HCT116 (cell line): ENCODE measurements at regions of chrX and their contacts with region 1.

Region 1: GRCh38 chrX:10189317-10190268 is 32.8 kb downstream of the CLCN4 start:
- DNase-seq: peak; percentile 51
- ATAC-seq: peak; percentile 90
- H3K4me3 ChIP-seq: no peak overlapping the region
- H3K27ac ChIP-seq: no peak overlapping the region
- H3K4me1 ChIP-seq: peaks cover 0 to 6% of the 10 kb centered on the region in 2 experiments; a peak in 2 of 4 replicates
- H3K27me3 ChIP-seq: no peaks in the 10 kb centered on the region
- CTCF ChIP-seq: peak; percentile 52 to 61 (median 52)
- POLR2A ChIP-seq: no peak
- RAD21 ChIP-seq: peak; percentile 79

Region 2: DNA sequence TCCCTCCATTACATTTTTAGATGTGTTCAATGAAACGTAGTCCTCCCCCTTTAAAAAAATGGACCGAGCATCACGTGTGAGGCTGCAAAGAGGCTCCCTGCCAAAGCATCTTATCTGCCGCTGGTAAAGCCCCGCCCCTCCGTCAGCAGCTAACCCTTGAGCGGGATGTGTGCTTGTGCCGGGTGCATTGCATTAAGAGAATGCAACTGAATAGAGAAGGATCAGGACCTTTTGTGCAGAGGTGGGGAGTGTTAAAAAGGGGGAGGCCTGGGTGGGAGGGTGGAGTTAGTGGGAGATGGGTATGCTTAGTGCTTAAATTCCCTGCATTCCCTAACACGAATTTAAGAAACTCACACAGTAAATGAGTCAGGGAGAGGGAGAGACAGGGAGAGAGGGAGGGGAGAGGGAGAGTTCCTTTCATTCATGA is 658.7 kb before region 1 on chrX:
- CTCF ChIA-PET with region 1: no interaction called
- POLR2A ChIA-PET with region 1: no interaction called
- RAD21 ChIA-PET with region 1: no interaction called
- intact Hi-C with region 1: no loop called
- DNase-seq: no peak
- ATAC-seq: peak; percentile 80
- H3K4me3 ChIP-seq: no peak overlapping the region
- H3K27ac ChIP-seq: no peak overlapping the region
- H3K4me1 ChIP-seq: peaks cover 2 to 8% of the 10 kb centered on the region in 2 experiments; a peak in 2 of 4 replicates
- H3K27me3 ChIP-seq: no peaks in the 10 kb centered on the region
- CTCF ChIP-seq: no peak
- POLR2A ChIP-seq: no peak
- RAD21 ChIP-seq: no peak

Region 3: DNA sequence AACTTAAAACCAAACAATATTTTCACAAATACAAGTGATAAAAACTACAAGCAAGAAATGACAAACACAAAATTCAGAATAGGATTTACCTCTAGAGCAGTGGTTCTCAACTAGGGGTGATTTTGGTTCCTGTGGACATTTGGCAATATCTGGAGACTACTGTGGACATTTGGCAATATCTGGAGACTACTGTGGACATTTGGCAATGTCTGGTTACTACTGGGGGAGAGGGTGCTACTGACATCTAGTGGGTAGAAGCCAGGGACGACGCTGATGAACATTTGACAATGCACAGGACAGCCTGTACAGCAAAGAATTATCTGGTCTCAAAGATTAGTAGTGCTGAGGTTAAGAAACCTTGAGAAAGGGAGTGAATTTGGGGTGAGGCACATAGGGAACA is 137.0 kb after region 1 on chrX:
- CTCF ChIA-PET with region 1: interaction called, 5 read pairs
- POLR2A ChIA-PET with region 1: no interaction called
- RAD21 ChIA-PET with region 1: no interaction called
- intact Hi-C with region 1: loop called (anchors 1 kb)
- DNase-seq: peak; percentile 22
- ATAC-seq: peak; percentile 87
- H3K4me3 ChIP-seq: no peak overlapping the region
- H3K27ac ChIP-seq: no peak overlapping the region
- H3K4me1 ChIP-seq: peaks cover 7 to 12% of the 10 kb centered on the region in 2 experiments; a peak in 3 of 4 replicates
- H3K27me3 ChIP-seq: no peaks in the 10 kb centered on the region
- CTCF ChIP-seq: peak; percentile 46 to 57 (median 57); a peak in 5 of 6 replicates
- POLR2A ChIP-seq: no peak
- RAD21 ChIP-seq: peak; percentile 67

Region 4: DNA sequence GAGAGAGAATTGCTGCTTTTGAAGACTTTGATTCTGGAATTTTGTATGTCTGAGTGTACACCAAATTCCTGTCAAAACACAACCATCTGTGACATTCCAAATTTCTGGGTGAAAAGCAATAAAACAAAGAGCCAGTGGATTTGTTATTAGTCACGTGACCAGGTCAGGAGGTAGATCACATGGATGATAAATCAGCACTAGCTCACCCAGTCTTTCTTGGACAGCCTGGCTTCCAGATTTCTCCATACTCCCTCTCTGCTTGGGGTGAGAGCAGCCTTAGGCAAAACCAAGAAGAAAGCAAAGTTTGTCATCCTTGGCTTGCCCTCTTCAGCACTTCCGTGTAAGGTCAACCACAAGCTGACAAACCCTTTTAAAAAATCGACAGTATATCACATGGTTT is 161.4 kb after region 1 on chrX:
- CTCF ChIA-PET with region 1: no interaction called
- POLR2A ChIA-PET with region 1: no interaction called
- RAD21 ChIA-PET with region 1: no interaction called
- intact Hi-C with region 1: no loop called
- DNase-seq: no peak
- ATAC-seq: no peak
- H3K4me3 ChIP-seq: no peak overlapping the region
- H3K27ac ChIP-seq: no peak overlapping the region
- H3K4me1 ChIP-seq: no peaks in the 10 kb centered on the region
- H3K27me3 ChIP-seq: no peaks in the 10 kb centered on the region
- CTCF ChIP-seq: no peak
- POLR2A ChIP-seq: no peak
- RAD21 ChIP-seq: no peak

Region 5: DNA sequence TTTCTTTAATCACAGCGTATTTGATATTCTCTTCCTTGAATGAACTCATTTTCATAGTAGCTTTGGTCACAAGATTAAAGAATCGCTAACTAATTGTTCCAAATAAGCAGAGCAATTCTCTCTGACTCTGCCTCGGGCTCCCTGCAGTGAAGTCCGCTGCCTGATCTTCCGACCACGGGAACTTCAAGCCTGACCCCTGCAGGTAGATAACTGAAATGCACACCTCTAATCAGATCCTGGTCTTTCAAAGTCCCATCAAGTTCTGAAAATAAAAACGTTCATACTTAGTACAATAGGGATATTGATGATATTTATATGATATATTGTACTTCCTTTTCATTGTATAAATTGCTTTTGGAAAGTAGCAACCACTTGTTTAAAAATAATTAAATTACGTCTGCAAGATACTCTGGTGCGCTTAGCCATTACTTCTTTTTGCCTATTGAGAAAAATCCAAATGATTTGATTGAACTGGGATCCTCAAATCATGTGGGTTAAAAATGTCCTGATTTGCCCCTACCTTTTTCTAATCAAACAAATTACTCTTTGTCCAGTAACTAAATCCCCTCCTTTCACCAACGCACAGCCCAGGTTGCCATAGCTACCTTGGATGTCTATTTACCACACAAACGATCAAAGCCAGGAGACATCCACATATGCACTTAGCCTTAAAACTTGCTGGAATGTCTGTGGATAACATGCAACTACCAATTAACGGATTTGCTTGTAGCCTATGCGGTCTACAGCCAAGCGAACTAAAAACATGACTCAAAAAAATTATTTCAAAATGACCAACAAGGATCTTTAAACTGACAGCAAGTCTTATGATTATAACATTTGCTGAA is 426.6 kb after region 1 on chrX:
- CTCF ChIA-PET with region 1: interaction called, 6 read pairs
- POLR2A ChIA-PET with region 1: no interaction called
- RAD21 ChIA-PET with region 1: interaction called in 1 of 2 experiments, 3 read pairs
- intact Hi-C with region 1: loop called (anchors 5 kb)
- DNase-seq: no peak
- ATAC-seq: peak; percentile 33; the same call in 1 of the 2 replicates
- H3K4me3 ChIP-seq: peak overlapping the region; percentile 13 to 44; a peak in 2 of 4 replicates
- H3K27ac ChIP-seq: peak overlapping the region; percentile 85
- H3K4me1 ChIP-seq: peaks cover 36 to 68% of the 10 kb centered on the region in 2 experiments
- H3K27me3 ChIP-seq: no peaks in the 10 kb centered on the region
- CTCF ChIP-seq: peak in 2 of 3 experiments; percentile 56 to 62; a peak in 4 of 6 replicates
- POLR2A ChIP-seq: no peak
- RAD21 ChIP-seq: no peak

Region 6: DNA sequence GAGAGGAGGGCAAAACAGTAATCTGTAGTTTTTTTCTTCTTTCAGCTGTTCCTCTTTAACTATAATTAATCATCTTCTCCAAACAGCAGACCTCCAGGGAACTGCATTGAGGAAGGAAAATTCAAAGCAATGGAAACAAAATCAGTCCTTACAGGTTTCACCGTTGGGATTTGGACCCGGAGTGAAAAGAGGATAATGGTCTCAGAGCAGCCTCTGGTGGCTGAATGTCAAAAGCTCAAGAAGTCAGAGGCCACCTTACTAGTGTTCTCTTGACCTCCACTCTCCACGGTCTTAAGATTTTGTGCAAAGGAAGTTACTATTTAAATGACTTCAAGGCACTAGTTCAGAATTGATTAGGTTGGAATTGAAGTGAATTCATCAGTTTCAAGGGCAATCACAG is 446.7 kb after region 1 on chrX:
- CTCF ChIA-PET with region 1: interaction called, 22 read pairs
- POLR2A ChIA-PET with region 1: no interaction called
- RAD21 ChIA-PET with region 1: interaction called in 1 of 2 experiments, 3 read pairs
- intact Hi-C with region 1: loop called (anchors 1 kb)
- DNase-seq: peak; percentile 59
- ATAC-seq: peak; percentile 48
- H3K4me3 ChIP-seq: 0 out of 4 replicates have a peak overlapping the region, but pooled peaks of 1 of the 2 experiments have one; percentile 26
- H3K27ac ChIP-seq: peak overlapping the region; percentile 93; the same call in 1 of the 2 replicates
- H3K4me1 ChIP-seq: peaks cover 38 to 51% of the 10 kb centered on the region in 2 experiments
- H3K27me3 ChIP-seq: no peaks in the 10 kb centered on the region
- CTCF ChIP-seq: peak; percentile 57 to 77 (median 65); a peak in 5 of 6 replicates
- POLR2A ChIP-seq: no peak
- RAD21 ChIP-seq: peak; percentile 88

Region 7: DNA sequence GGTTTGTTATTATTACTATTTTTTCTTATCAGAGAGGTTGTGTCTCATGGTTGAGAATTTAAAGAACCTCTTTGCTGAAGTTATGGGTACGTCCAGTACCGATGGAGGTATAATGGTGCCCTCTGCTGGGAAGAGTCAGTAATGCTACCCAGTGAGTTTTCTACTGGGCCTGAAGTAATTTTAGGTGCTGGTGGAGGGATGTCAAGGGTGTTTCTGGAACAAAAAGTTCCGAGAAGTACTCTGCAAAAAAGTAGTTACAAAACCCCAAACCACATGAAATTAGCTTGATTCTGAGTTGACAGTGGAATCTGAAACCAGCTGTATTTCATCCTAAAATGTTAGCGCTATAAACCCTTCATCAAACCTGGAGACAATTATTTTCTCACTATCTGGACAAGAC is 533.3 kb after region 1 on chrX:
- CTCF ChIA-PET with region 1: interaction called, 33 read pairs
- POLR2A ChIA-PET with region 1: no interaction called
- RAD21 ChIA-PET with region 1: no interaction called
- intact Hi-C with region 1: loop called (anchors 1 kb)
- DNase-seq: peak; percentile 10
- ATAC-seq: peak; percentile 84
- H3K4me3 ChIP-seq: no peak overlapping the region
- H3K27ac ChIP-seq: no peak overlapping the region
- H3K4me1 ChIP-seq: no peaks in the 10 kb centered on the region
- H3K27me3 ChIP-seq: no peaks in the 10 kb centered on the region
- CTCF ChIP-seq: peak; percentile 53 to 68 (median 57); a peak in 5 of 6 replicates
- POLR2A ChIP-seq: no peak
- RAD21 ChIP-seq: peak; percentile 64

Region 8: GRCh38 chrX:11100281-11101035 is 910.9 kb after region 1 on chrX:
- CTCF ChIA-PET with region 1: no interaction called
- POLR2A ChIA-PET with region 1: no interaction called
- RAD21 ChIA-PET with region 1: no interaction called
- intact Hi-C with region 1: loop called (anchors 10 kb)
- DNase-seq: no peak
- ATAC-seq: no peak
- H3K4me3 ChIP-seq: no peak overlapping the region
- H3K27ac ChIP-seq: no peak overlapping the region
- H3K4me1 ChIP-seq: no peaks in the 10 kb centered on the region
- H3K27me3 ChIP-seq: no peaks in the 10 kb centered on the region
- CTCF ChIP-seq: peak in 2 of 3 experiments; percentile 27 to 45; a peak in 4 of 6 replicates
- POLR2A ChIP-seq: no peak
- RAD21 ChIP-seq: peak; percentile 55

Region 9: DNA sequence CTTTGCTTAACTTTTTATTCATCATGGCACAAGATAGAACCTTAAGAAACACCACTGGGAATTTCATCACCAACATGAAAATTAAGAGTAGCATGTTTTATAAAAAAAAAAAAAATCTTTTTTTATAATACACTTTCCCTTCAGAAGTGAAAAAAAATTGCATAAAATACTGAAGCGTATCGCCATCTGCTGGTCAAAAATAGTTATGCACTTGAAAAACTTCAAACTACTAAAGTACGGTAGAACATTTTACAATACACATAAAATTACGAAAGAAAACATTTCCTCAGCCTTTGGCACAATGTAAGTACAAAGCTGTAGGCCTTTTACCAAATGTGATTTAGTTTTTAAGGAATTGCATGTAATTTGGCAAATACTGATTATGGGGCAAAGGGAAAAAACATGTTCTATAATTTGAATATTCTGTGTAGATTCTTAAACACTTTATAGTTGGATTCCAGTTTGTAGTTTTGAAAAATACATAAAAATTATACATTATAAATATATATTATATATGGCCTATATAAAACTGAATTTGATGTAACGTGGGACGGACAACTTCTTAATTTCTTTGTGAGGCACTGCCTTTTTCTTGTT is 948.0 kb after region 1 on chrX:
- CTCF ChIA-PET with region 1: interaction called, 21 read pairs
- POLR2A ChIA-PET with region 1: no interaction called
- RAD21 ChIA-PET with region 1: no interaction called
- intact Hi-C with region 1: loop called (anchors 1 kb)
- DNase-seq: peak; percentile 13
- ATAC-seq: no peak
- H3K4me3 ChIP-seq: no peak overlapping the region
- H3K27ac ChIP-seq: no peak overlapping the region
- H3K4me1 ChIP-seq: no peaks in the 10 kb centered on the region
- H3K27me3 ChIP-seq: no peaks in the 10 kb centered on the region
- CTCF ChIP-seq: peak; percentile 29 to 48 (median 47); a peak in 4 of 6 replicates
- POLR2A ChIP-seq: no peak
- RAD21 ChIP-seq: peak; percentile 40